AG04449 (cell line): ENCODE measurements at regions of chr1 and their contacts with region 1.

Region 1: DNA sequence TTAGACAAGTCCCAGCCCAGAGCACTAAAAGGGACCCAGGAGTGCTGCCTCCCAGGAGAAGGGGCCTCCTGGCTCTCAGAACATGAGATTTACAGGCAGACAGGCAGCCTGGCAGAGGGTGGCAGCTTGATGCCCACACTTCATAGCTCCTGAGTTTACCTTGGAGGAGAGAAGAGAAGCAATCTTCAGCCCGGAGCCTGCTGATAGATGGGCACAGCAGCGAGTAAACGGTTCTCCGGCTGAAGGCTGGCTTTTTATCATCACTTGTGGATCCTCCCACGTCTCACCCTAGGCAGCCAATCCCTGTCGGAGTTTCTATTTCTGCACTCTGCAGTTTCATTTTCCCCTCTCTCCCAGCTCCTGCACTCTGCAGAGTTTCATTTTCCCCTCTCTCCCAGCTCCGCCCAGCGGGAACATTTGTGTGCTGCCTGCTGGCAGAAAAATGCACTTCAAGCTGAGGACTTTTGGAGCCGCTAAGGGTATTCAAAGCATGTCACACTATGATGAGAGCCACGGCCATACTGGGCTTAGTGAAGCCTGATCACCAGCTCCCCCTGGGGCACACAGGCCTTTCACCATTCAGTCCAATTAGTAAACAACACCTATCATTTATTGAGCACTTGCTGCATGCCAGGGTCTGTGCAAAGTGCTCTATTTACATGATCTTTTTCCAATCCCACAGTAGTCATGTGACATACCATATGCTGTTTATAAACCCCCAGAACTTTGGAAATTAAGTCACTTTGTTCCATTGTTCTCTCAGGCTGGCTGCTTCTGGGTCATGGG is at the start of gene IFI6:
- DNase-seq: peak; percentile 82
- H3K4me3 ChIP-seq: peak within 1 kb of the TSS; percentile 61
- CTCF ChIP-seq: peak; percentile 32

Region 2: GRCh38 chr1:27575840-27576331 is 96.3 kb before region 1 on chr1:
- CTCF ChIA-PET with region 1: no interaction called
- POLR2A ChIA-PET with region 1: no interaction called
- DNase-seq: no peak
- H3K4me3 ChIP-seq: peak overlapping the region; percentile 34
- CTCF ChIP-seq: peak; percentile 15

Region 3: GRCh38 chr1:27650539-27651175 is 21.5 kb before region 1 on chr1:
- CTCF ChIA-PET with region 1: interaction called, 12 read pairs
- POLR2A ChIA-PET with region 1: no interaction called
- DNase-seq: no peak
- H3K4me3 ChIP-seq: no peak overlapping the region
- CTCF ChIP-seq: no peak

Region 4: GRCh38 chr1:27656157-27656893 is 15.8 kb before region 1 on chr1:
- CTCF ChIA-PET with region 1: interaction called, 33 read pairs
- POLR2A ChIA-PET with region 1: interaction called, 3 read pairs
- DNase-seq: no peak
- H3K4me3 ChIP-seq: no peak overlapping the region
- CTCF ChIP-seq: no peak

Region 5: DNA sequence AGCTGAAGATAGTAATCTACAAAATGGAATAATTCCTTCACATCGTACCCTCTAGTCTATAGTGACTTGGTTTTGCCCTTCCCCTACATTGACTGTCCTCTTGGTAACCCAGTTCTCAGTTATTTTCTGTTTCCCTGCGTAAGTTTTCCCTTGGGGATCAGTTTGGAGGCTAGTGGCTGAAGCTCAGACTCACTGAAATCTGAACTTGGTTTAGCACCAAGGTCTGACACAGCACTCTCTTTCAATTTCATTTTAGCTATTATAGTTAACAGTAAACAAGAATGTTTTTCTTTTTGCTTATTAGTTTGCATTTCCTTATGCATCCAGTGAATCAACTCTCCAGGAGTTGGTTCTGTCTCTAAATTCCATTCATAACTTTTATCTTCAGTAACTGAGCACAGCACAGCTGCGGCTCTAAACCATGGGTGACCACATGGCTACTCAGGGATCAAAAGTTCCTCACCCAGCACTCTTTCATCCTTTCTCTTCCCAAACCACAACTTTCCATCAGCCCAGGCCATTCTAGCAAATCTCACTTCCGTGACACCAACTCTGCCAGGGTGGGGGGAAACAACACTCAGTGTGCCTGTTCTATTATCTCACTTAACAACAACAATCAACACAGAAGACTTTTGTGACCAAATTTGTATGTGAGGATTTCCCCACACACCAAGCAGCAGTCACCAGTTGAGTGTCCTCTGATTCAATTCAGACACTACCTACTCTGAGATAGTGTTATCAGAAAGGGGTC is 17.4 kb after region 1 on chr1:
- CTCF ChIA-PET with region 1: interaction called, 23 read pairs
- POLR2A ChIA-PET with region 1: no interaction called
- DNase-seq: no peak
- H3K4me3 ChIP-seq: no peak overlapping the region
- CTCF ChIP-seq: no peak

Region 6: GRCh38 chr1:27719286-27720251 is 47.4 kb after region 1 on chr1:
- CTCF ChIA-PET with region 1: interaction called, 52 read pairs
- POLR2A ChIA-PET with region 1: interaction called, 3 read pairs
- DNase-seq: no peak
- H3K4me3 ChIP-seq: no peak overlapping the region
- CTCF ChIP-seq: peak; percentile 18

Region 7: DNA sequence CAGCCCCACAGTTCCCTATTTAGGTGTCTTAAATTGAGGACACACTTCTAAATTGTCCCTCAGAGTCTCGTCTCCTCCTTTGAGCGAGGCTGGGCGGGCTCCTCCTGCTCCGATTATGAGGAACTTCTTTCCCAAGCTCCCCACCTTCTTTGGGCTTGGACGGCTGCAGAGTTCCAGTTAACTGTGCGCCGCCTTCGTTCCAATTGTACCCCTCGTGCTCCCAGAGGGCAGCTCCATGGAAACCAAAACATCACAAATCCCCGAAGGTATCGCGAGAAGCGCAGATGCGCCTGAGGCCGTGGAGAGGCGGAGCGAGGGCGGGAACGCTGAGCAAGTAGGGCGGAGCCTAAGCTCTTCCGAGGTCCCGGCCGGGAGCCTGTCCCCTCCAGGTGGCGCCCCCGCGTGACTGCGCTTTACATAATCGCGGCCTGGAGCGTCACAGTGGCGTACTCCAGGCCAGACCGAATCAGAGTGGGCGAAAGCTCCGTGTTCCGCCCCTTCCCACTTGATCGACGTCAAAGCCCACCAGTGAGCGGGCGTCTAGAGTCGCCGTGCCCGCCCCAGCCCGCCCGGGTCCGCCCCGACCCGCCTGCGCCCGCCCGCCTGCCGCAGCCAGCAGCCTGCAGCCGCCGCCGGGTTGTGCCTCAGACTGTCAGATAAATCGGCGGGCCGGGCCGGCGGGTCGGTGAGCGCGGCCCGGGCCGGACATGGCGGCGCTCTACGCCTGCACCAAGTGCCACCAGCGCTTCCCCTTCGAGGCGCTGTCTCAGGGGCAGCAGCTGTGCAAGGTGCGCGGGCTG is 53.4 kb after region 1 on chr1 and contains the start of gene FAM76A:
- CTCF ChIA-PET with region 1: interaction called, 52 read pairs
- POLR2A ChIA-PET with region 1: interaction called, 6 read pairs
- DNase-seq: peak; percentile 92
- H3K4me3 ChIP-seq: peak within 1 kb of the TSS; percentile 80
- CTCF ChIP-seq: peak; percentile 71